Activated B cell treated with CpG ODN at 0.5 μM for 24 hours (primary cell): ENCODE measurements at regions of chr2 and their contacts with region 1.

Region 1: DNA sequence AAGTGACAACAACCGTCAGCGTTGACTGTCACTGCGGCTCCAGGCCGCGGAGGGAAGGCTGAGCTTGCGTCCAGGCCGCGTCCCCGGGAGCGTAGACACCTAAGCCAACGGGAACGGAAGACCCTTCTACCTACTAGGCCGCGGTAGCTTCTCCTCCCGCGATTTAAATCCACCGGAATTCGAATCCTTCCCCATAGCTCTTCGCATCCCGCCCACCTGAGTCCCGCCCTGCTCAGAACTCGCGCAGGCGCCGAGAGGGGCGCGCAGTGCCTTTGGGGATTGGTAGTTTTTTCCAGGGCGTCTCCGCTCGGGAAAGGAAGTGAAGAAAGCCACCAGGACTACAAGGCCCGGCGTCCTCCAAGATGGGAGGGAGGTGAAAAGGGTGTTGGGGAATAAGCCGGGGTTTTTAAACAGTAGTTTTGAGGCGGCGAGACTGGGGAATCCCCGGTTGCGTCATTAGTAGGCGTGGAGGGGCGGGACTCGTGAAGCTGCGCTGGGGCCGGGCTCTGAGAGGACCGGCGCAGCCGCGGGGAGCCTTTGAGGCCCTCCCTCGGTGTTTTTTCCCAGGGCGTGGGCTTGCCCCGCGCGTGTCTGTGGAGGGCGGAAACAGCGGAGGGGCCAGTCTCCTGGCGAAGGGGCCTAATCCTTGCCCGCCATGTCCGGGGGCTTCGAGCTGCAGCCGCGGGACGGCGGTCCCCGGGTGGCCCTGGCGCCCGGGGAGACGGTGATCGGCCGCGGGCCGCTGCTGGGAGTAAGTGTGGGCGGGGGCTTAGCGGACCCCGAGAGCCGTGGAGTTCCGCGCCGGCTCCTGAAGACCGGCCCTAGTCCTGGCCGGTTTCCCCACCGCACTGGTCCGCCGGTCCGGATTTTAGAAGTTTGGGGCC is at the starts of genes APLF and FBXO48:
- DNase-seq: peak; percentile 96
- ATAC-seq: peak; percentile 94
- H3K4me3 Mint-ChIP-seq: peak within 1 kb of the TSS; percentile 98
- H3K27ac Mint-ChIP-seq: peak within 1 kb of the TSS; percentile 93
- H3K4me1 Mint-ChIP-seq: peaks cover 29% of the 10 kb centered on the region
- H3K27me3 Mint-ChIP-seq: no peaks in the 10 kb centered on the region
- CTCF ChIP-seq: no peak
- total RNA-seq, gene APLF: 6.4 and 6.8 TPM in 2 replicates
- total RNA-seq, gene FBXO48: 1.8 and 2.6 TPM in 2 replicates

Region 2: GRCh38 chr2:68452168-68452900 is 15.0 kb before region 1 on chr2:
- CTCF ChIA-PET with region 1: interaction called, 12 read pairs
- POLR2A ChIA-PET with region 1: no interaction called
- intact Hi-C with region 1: no loop called
- DNase-seq: no peak
- ATAC-seq: peak; percentile 20
- H3K4me3 Mint-ChIP-seq: no peak overlapping the region
- H3K27ac Mint-ChIP-seq: no peak overlapping the region
- H3K4me1 Mint-ChIP-seq: no peaks in the 10 kb centered on the region
- H3K27me3 Mint-ChIP-seq: no peaks in the 10 kb centered on the region
- CTCF ChIP-seq: no peak

Region 3: GRCh38 chr2:68715353-68716041 is 248.2 kb after region 1 on chr2:
- CTCF ChIA-PET with region 1: interaction called, 42 read pairs
- POLR2A ChIA-PET with region 1: no interaction called
- intact Hi-C with region 1: loop called (anchors 1 kb)
- DNase-seq: no peak
- ATAC-seq: peak; percentile 51
- H3K4me3 Mint-ChIP-seq: peak overlapping the region; percentile 21
- H3K27ac Mint-ChIP-seq: peak overlapping the region; percentile 89
- H3K4me1 Mint-ChIP-seq: peaks cover 82% of the 10 kb centered on the region
- H3K27me3 Mint-ChIP-seq: no peaks in the 10 kb centered on the region
- CTCF ChIP-seq: no peak

Region 4: GRCh38 chr2:68837164-68837860 is 370.0 kb after region 1 on chr2:
- CTCF ChIA-PET with region 1: interaction called, 13 read pairs
- POLR2A ChIA-PET with region 1: interaction called, 6 read pairs
- intact Hi-C with region 1: loop called (anchors 1 kb)
- DNase-seq: peak; percentile 53
- ATAC-seq: peak; percentile 33
- H3K4me3 Mint-ChIP-seq: no peak overlapping the region
- H3K27ac Mint-ChIP-seq: peak overlapping the region; percentile 74
- H3K4me1 Mint-ChIP-seq: peaks cover 57% of the 10 kb centered on the region
- H3K27me3 Mint-ChIP-seq: no peaks in the 10 kb centered on the region
- CTCF ChIP-seq: no peak

Region 5: GRCh38 chr2:69386789-69387734 is 919.7 kb after region 1 on chr2 and contains the start of gene GFPT1:
- CTCF ChIA-PET with region 1: no interaction called
- POLR2A ChIA-PET with region 1: no interaction called
- intact Hi-C with region 1: loop called (anchors 2 kb)
- DNase-seq: peak; percentile 94
- ATAC-seq: peak; percentile 97
- H3K4me3 Mint-ChIP-seq: peak within 1 kb of the TSS; percentile 88
- H3K27ac Mint-ChIP-seq: peak within 1 kb of the TSS; percentile 81
- H3K4me1 Mint-ChIP-seq: peaks cover 38% of the 10 kb centered on the region
- H3K27me3 Mint-ChIP-seq: no peaks in the 10 kb centered on the region
- CTCF ChIP-seq: no peak
- total RNA-seq, gene GFPT1: 11.5 and 14.9 TPM in 2 replicates

Region 6: DNA sequence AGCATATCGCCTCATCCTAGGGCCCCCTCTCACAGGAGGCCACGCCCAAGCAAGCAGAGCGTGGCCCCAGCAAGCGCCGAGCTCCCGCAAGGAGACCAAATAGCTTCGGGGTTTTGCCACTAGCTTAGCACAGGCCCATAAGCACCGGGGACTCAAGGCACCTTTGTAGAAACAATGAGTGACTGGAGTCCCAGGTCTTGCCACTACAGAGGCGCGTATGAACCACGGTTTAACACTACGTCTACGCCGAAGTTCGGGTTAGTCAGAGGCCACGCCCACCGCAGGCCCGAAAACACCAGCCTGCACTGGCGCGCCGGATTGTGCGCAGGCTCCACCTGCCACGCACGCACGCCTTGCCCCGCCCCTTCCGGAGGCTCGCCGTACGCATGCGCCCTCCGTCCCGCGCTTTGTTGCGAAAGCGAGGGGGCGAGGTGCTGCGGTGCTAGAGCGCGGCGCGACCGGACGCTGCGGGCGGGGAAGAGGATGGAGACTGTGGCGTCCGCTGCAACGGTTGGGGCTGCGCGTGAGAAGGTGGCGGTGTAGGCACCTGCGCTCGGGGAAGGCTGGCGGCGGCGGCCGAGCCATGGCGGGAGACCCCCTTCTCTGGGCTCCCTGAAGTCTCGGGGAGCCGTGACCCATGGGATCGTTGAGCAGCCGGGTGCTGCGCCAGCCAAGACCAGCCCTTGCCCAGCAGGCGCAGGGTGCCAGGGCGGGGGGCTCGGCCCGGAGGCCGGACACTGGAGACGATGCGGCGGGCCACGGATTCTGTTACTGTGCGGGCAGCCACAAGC is 1362.1 kb after region 1 on chr2 and contains the start of gene GMCL1:
- CTCF ChIA-PET with region 1: no interaction called
- POLR2A ChIA-PET with region 1: no interaction called
- intact Hi-C with region 1: loop called (anchors 10 kb)
- DNase-seq: peak; percentile 99
- ATAC-seq: peak; percentile 95
- H3K4me3 Mint-ChIP-seq: peak within 1 kb of the TSS; percentile 94
- H3K27ac Mint-ChIP-seq: peak within 1 kb of the TSS; percentile 96
- H3K4me1 Mint-ChIP-seq: peaks cover 29% of the 10 kb centered on the region
- H3K27me3 Mint-ChIP-seq: no peaks in the 10 kb centered on the region
- CTCF ChIP-seq: no peak
- total RNA-seq, gene GMCL1: 8.0 and 13.0 TPM in 2 replicates